ENCODE measurements at regions of chr2 and their contacts with region 1.

Region 1: GRCh38 chr2:29923110-29923721 is 1.8 kb upstream of the ALK start:
- DNase-seq: peak; percentile 31
- H3K4me3 ChIP-seq: no peak overlapping the region
- H3K27ac ChIP-seq: no peak overlapping the region
- H3K4me1 ChIP-seq: peaks cover 18% of the 10 kb centered on the region
- H3K27me3 ChIP-seq: peaks cover 4% of the 10 kb centered on the region
- CTCF ChIP-seq: peak; percentile 66 to 85 (median 72)
- POLR2A ChIP-seq: no peak

Region 2: GRCh38 chr2:30026087-30027055 is 103.2 kb after region 1 on chr2:
- intact Hi-C with region 1: loop called (anchors 5 kb)
- DNase-seq: peak; percentile 19
- H3K4me3 ChIP-seq: no peak overlapping the region
- H3K27ac ChIP-seq: no peak overlapping the region
- H3K4me1 ChIP-seq: no peaks in the 10 kb centered on the region
- H3K27me3 ChIP-seq: no peaks in the 10 kb centered on the region
- CTCF ChIP-seq: peak in 3 of 4 experiments; percentile 45 to 57 (median 54)
- POLR2A ChIP-seq: no peak

Measured in prostate gland (tissue), 2 donors.